B cell (primary cell): ENCODE measurements at regions of chr5 and their contacts with region 1.

Region 1: DNA sequence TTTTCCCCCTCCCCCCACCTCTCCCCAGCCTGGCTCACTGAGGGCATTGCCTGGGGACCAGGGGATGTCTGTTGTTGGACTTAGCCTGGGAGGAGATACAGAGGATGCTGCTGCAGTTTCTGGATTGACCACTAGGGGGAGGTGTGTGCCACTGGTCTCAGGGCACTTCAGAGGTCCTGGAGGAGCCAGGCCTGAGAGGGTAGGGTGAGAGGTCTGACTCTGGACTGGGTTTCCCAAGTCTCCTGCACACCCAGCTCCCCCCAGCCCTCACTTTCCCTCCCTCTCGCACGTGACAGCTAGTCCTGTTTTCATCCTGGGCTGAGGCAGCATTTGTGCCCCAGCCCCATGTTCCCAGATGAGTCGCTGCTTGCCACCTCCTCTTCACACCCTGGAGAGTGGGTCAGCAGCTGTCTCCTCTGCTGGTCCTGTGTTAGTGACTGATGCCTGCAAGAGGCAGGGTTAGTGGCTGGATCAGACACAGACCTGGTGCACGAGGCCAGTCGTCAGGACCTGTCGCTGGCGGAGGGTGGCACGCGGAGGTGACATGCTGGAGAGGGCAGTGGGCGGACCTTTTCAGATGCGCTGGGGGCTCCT is 4.4 kb downstream of the IL3 start:
- DNase-seq: peak; percentile 81
- ATAC-seq: peak; percentile 82
- H3K4me3 ChIP-seq: no peak overlapping the region
- H3K4me3 Mint-ChIP-seq: no peak overlapping the region
- H3K27ac ChIP-seq: no peak overlapping the region
- H3K27ac Mint-ChIP-seq: no peak overlapping the region
- H3K4me1 ChIP-seq: peaks cover 0 to 7% of the 10 kb centered on the region in 2 donors
- H3K4me1 Mint-ChIP-seq: peaks cover 3% of the 10 kb centered on the region
- H3K27me3 ChIP-seq: no peaks in the 10 kb centered on the region
- H3K27me3 Mint-ChIP-seq: no peaks in the 10 kb centered on the region
- CTCF ChIP-seq: peak; percentile 91

Region 2: GRCh38 chr5:131423056-131423455 is 641.8 kb before region 1 on chr5:
- CTCF ChIA-PET with region 1: interaction called, 3 read pairs
- POLR2A ChIA-PET with region 1: no interaction called
- intact Hi-C with region 1: loop called (anchors 5 kb)
- DNase-seq: no peak
- ATAC-seq: peak; percentile 21
- H3K4me3 ChIP-seq: no peak overlapping the region
- H3K4me3 Mint-ChIP-seq: no peak overlapping the region
- H3K27ac ChIP-seq: no peak overlapping the region
- H3K27ac Mint-ChIP-seq: no peak overlapping the region
- H3K4me1 ChIP-seq: no peaks in the 10 kb centered on the region
- H3K4me1 Mint-ChIP-seq: peaks cover 3% of the 10 kb centered on the region
- H3K27me3 ChIP-seq: no peaks in the 10 kb centered on the region
- H3K27me3 Mint-ChIP-seq: no peaks in the 10 kb centered on the region
- CTCF ChIP-seq: peak; percentile 47

Region 3: DNA sequence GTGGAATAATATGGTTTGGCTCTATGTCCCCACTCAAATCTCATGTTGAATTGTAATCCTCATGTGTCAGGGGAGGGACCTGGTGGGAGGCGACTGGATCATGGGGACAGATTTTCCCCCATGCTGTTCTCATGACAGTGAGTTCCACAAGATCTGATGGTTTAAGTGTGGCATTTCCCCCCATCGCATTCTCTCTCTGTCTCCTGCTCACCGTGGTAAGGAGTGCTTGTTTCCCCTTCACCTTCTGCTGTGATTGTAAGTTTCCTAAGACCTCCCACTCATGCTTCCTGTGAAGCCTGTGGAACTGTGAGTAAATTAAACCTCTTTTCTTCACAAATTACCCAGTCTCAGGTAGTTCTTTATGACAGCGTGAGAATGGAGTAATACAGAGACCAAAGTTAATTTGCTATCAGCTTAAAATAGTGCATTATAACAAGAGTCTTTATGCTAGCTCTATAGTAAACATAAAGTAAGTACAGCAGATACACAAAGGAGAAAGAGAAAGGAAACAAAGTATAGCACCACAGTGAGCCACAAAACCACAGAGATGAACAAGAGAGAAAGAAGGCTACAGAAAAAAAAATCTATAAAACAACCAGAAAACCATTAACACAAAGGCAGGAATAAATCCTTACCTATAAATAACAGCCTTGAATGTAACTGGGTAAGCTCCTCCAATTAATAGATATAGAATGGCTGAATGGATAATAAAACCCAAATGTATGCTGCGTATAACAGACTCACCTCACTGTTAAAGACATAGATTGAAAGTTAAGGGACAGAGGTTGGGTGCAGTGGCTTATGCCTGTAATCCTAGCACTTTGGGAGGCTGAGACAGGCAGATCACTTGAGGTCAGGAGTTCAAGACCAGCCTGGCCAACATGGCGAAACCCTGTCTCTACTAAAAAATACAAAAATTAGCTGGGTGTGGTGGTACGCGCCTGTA is 469.5 kb before region 1 on chr5:
- CTCF ChIA-PET with region 1: interaction called, 70 read pairs
- POLR2A ChIA-PET with region 1: no interaction called
- intact Hi-C with region 1: no loop called
- DNase-seq: no peak
- ATAC-seq: no peak
- H3K4me3 ChIP-seq: no peak overlapping the region
- H3K4me3 Mint-ChIP-seq: peak overlapping the region; percentile 34
- H3K27ac ChIP-seq: no peak overlapping the region
- H3K27ac Mint-ChIP-seq: peak overlapping the region; percentile 67
- H3K4me1 ChIP-seq: peaks cover 18 to 24% of the 10 kb centered on the region in 2 donors
- H3K4me1 Mint-ChIP-seq: peaks cover 45% of the 10 kb centered on the region
- H3K27me3 ChIP-seq: no peaks in the 10 kb centered on the region
- H3K27me3 Mint-ChIP-seq: no peaks in the 10 kb centered on the region
- CTCF ChIP-seq: no peak

Region 4: DNA sequence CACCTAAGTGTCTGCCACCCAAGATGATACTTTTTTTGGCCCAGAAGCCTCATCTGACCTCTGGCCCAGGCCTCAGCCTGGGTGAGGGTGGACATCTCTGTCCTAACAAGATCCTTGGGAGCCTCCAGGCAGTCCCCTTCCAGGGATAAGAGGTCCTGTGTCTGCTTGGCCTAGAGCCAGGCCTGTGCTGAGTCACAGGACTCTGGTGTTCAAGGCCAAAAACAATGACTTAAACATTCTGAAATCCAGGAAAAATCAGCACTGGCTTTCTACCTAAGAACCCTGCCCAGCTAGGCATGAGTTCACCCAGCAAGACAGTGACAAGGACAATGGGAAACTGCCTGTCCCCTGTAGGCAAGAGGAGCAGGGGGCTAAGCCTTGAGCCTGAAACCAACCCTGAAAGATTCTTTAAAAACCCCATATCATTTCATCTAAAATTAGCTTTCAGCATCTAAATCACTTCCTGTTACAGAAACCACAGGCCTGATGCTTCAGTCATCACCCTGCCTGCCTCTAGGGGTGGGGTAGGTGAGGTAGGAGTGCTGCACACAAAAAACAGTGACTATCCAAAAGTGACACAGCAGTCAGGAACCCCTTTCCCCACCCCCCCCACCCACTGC is 38.6 kb after region 1 on chr5:
- CTCF ChIA-PET with region 1: interaction called, 5 read pairs
- POLR2A ChIA-PET with region 1: no interaction called
- intact Hi-C with region 1: loop called (anchors 2 kb)
- DNase-seq: peak; percentile 72
- ATAC-seq: peak; percentile 80
- H3K4me3 ChIP-seq: peak overlapping the region in 2 of 5 experiments; percentile 18 to 42
- H3K4me3 Mint-ChIP-seq: peak overlapping the region; percentile 62
- H3K27ac ChIP-seq: peak overlapping the region; percentile 60 to 77
- H3K27ac Mint-ChIP-seq: peak overlapping the region; percentile 79
- H3K4me1 ChIP-seq: peaks cover 58 to 61% of the 10 kb centered on the region in 2 donors
- H3K4me1 Mint-ChIP-seq: peaks cover 80% of the 10 kb centered on the region
- H3K27me3 ChIP-seq: no peaks in the 10 kb centered on the region
- H3K27me3 Mint-ChIP-seq: no peaks in the 10 kb centered on the region
- CTCF ChIP-seq: peak; percentile 31

Region 5: GRCh38 chr5:132134384-132134783 is 69.5 kb after region 1 on chr5:
- CTCF ChIA-PET with region 1: interaction called, 7 read pairs
- POLR2A ChIA-PET with region 1: no interaction called
- intact Hi-C with region 1: loop called (anchors 1 kb)
- DNase-seq: peak; percentile 20
- ATAC-seq: no peak
- H3K4me3 ChIP-seq: no peak overlapping the region
- H3K4me3 Mint-ChIP-seq: no peak overlapping the region
- H3K27ac ChIP-seq: no peak overlapping the region
- H3K27ac Mint-ChIP-seq: no peak overlapping the region
- H3K4me1 ChIP-seq: no peaks in the 10 kb centered on the region
- H3K4me1 Mint-ChIP-seq: no peaks in the 10 kb centered on the region
- H3K27me3 ChIP-seq: peaks cover 0 to 5% (median 2%) of the 10 kb centered on the region in 4 experiments
- H3K27me3 Mint-ChIP-seq: peaks cover 19% of the 10 kb centered on the region
- CTCF ChIP-seq: peak; percentile 41

Region 6: DNA sequence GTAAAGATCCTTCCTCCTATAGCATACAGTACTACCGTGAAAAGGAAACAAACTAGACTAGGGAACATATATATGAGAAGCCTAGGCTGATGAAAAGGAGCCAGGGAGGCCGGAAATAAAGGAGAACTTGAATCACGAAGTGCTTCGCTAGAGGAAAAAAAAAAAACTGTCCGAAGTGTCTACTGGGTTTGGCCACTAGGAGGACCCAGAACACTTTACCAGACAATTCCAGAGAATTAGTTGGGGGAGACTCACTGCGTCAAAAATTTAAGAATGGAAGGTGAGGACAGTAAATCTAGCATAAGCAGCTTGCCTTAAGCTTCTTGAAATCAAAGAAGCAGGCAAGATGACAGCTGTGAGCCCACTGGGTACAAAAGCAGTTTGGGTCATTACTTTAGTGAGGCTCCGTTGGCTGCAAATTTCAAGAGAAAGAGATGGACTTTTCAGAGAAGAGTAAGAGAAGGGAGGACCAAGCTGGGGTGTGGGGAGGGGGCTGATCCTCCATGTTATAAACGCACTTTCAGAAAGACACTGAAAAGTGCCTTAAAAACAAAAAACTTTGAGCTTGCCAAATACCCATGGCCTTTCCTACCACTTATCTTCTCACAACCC is 115.4 kb after region 1 on chr5:
- CTCF ChIA-PET with region 1: interaction called, 11 read pairs
- POLR2A ChIA-PET with region 1: no interaction called
- intact Hi-C with region 1: loop called (anchors 2 kb)
- DNase-seq: peak; percentile 49
- ATAC-seq: no peak
- H3K4me3 ChIP-seq: no peak overlapping the region
- H3K4me3 Mint-ChIP-seq: no peak overlapping the region
- H3K27ac ChIP-seq: no peak overlapping the region
- H3K27ac Mint-ChIP-seq: no peak overlapping the region
- H3K4me1 ChIP-seq: peaks cover 17 to 19% of the 10 kb centered on the region in 2 donors
- H3K4me1 Mint-ChIP-seq: peaks cover 22% of the 10 kb centered on the region
- H3K27me3 ChIP-seq: no peaks in the 10 kb centered on the region
- H3K27me3 Mint-ChIP-seq: no peaks in the 10 kb centered on the region
- CTCF ChIP-seq: peak; percentile 75

Region 7: GRCh38 chr5:132238169-132238744 is 173.4 kb after region 1 on chr5:
- CTCF ChIA-PET with region 1: interaction called, 7 read pairs
- POLR2A ChIA-PET with region 1: no interaction called
- intact Hi-C with region 1: loop called (anchors 5 kb)
- DNase-seq: peak; percentile 78
- ATAC-seq: peak; percentile 80
- H3K4me3 ChIP-seq: no peak overlapping the region
- H3K4me3 Mint-ChIP-seq: no peak overlapping the region
- H3K27ac ChIP-seq: no peak overlapping the region
- H3K27ac Mint-ChIP-seq: no peak overlapping the region
- H3K4me1 ChIP-seq: no peaks in the 10 kb centered on the region
- H3K4me1 Mint-ChIP-seq: no peaks in the 10 kb centered on the region
- H3K27me3 ChIP-seq: no peaks in the 10 kb centered on the region
- H3K27me3 Mint-ChIP-seq: peaks cover 4% of the 10 kb centered on the region
- CTCF ChIP-seq: peak; percentile 89

Region 8: DNA sequence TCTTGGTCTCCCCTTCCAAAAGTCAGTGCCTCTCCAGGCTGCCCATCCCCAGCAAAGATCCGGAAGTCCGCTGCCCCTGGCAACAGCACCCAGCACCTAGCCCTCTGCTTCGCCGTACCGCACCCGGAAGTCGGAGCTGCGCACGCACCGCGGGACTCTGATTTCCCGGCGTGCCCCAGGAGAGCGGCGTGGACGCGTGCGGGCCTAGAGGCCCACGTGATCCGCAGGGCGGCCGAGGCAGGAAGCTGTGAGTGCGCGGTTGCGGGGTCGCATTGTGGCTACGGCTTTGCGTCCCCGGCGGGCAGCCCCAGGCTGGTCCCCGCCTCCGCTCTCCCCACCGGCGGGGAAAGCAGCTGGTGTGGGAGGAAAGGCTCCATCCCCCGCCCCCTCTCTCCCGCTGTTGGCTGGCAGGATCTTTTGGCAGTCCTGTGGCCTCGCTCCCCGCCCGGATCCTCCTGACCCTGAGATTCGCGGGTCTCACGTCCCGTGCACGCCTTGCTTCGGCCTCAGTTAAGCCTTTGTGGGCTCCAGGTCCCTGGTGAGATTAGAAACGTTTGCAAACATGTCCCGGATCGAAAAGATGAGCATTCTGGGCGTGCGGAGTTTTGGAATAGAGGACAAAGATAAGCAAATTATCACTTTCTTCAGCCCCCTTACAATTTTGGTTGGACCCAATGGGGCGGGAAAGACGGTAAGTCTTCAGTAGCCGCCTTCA is 492.1 kb after region 1 on chr5 and contains the start of gene RAD50:
- CTCF ChIA-PET with region 1: no interaction called
- POLR2A ChIA-PET with region 1: no interaction called
- intact Hi-C with region 1: no loop called
- DNase-seq: peak; percentile 91
- ATAC-seq: peak; percentile 94
- H3K4me3 ChIP-seq: peak within 1 kb of the TSS; percentile 62 to 88 (median 81)
- H3K4me3 Mint-ChIP-seq: peak within 1 kb of the TSS; percentile 96
- H3K27ac ChIP-seq: peak within 1 kb of the TSS; percentile 72 to 88
- H3K27ac Mint-ChIP-seq: peak within 1 kb of the TSS; percentile 97
- H3K4me1 ChIP-seq: peaks cover 8 to 21% of the 10 kb centered on the region in 2 donors
- H3K4me1 Mint-ChIP-seq: peaks cover 26% of the 10 kb centered on the region
- H3K27me3 ChIP-seq: no peaks in the 10 kb centered on the region
- H3K27me3 Mint-ChIP-seq: no peaks in the 10 kb centered on the region
- CTCF ChIP-seq: no peak
- total RNA-seq, gene RAD50: 31.7 and 32.7 TPM in 2 replicates